Activated CD4-positive, alpha-beta T cell treated with anti-CD3 and anti-CD28 coated beads for 36 hours (primary cell): ENCODE measurements at regions of chr6 and their contacts with region 1.

Region 1: DNA sequence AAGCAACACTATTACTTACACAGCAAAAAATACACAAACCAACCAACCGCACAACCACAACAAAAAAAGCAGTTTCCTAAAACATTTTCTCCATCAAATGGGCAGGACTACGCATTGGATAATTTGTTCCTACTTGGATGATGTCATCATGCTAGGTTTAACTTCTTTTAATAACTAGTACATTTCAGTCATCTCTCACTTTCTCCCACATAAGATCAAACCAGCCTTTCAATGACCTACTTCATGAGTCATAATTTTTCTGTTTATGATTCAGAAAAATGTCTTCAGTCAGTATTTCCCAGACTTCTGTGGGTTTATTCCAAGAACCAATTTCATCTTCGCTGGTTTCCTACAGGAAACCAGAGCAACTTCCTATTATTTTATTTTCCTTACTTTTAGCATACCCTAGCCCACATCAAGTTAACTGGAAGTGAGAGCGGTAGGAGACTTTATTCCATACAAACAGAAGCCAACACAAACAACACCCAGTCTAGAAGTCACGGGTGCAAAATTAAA is 134.2 kb downstream of the GMDS start:
- DNase-seq: peak; percentile 24
- ATAC-seq: peak; percentile 85
- H3K4me3 Mint-ChIP-seq: peak overlapping the region; percentile 62
- H3K27ac Mint-ChIP-seq: peak overlapping the region; percentile 88
- H3K4me1 Mint-ChIP-seq: peaks cover 31% of the 10 kb centered on the region
- H3K27me3 Mint-ChIP-seq: peaks cover 11% of the 10 kb centered on the region

Region 2: DNA sequence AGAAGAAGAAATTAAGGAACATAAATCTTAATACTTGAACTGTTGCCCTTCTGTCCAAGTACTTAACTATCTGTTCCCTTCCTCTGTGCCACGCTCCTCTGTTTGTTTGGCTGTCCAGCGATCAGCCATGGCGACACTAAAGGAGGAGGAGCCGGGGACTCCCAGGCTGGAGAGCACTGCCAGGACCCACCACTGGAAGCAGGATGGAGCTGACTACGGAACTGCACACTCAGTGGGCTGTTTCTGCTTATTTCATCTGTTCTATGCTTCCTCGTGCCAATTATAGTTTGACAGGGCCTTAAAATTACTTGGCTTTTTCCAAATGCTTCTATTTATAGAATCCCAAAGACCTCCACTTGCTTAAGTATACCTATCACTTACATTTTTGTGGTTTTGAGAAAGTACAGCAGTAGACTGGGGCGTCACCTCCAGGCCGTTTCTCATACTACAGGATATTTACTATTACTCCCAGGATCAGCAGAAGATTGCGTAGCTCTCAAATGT is 1702.6 kb before region 1 on chr6:
- CTCF ChIA-PET with region 1: no interaction called
- POLR2A ChIA-PET with region 1: no interaction called
- intact Hi-C with region 1: no loop called
- DNase-seq: peak; percentile 50
- ATAC-seq: no peak
- H3K4me3 Mint-ChIP-seq: no peak overlapping the region
- H3K27ac Mint-ChIP-seq: peak overlapping the region; percentile 59
- H3K4me1 Mint-ChIP-seq: peaks cover 73% of the 10 kb centered on the region
- H3K27me3 Mint-ChIP-seq: no peaks in the 10 kb centered on the region

Region 3: DNA sequence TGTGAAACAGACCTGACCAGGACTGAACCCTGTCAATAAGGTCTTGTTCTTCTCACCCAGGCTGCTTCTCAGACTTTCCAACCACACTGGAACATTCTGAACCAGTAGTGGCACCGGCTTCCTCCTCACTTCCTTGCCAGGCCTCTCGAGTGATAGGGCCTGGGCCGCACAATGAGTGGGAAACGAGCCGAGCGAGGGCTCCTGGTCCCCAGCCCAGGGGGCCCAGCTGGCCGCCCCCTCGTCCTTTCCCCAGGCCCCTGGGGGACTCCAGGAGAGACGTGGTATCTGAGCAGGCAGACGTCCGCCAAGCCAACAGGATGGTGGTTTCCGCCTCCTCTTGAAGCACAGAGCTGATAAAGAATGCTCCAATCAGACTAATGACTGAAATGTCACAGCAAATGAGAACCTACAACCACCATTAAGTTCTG is 16.3 kb after region 1 on chr6:
- CTCF ChIA-PET with region 1: interaction called, 3 read pairs
- POLR2A ChIA-PET with region 1: no interaction called
- intact Hi-C with region 1: loop called (anchors 1 kb)
- DNase-seq: peak; percentile 75
- ATAC-seq: peak; percentile 92
- H3K4me3 Mint-ChIP-seq: no peak overlapping the region
- H3K27ac Mint-ChIP-seq: peak overlapping the region; percentile 8
- H3K4me1 Mint-ChIP-seq: peaks cover 32% of the 10 kb centered on the region
- H3K27me3 Mint-ChIP-seq: no peaks in the 10 kb centered on the region

Region 4: GRCh38 chr6:2186516-2186915 is 75.3 kb after region 1 on chr6:
- CTCF ChIA-PET with region 1: interaction called, 3 read pairs
- POLR2A ChIA-PET with region 1: no interaction called
- intact Hi-C with region 1: loop called (anchors 1 kb)
- DNase-seq: peak; percentile 56
- ATAC-seq: peak; percentile 74
- H3K4me3 Mint-ChIP-seq: no peak overlapping the region
- H3K27ac Mint-ChIP-seq: no peak overlapping the region
- H3K4me1 Mint-ChIP-seq: peaks cover 24% of the 10 kb centered on the region
- H3K27me3 Mint-ChIP-seq: peaks cover 19% of the 10 kb centered on the region

Region 5: GRCh38 chr6:2542858-2543218 is 431.6 kb after region 1 on chr6:
- CTCF ChIA-PET with region 1: no interaction called
- POLR2A ChIA-PET with region 1: no interaction called
- intact Hi-C with region 1: loop called in 1 of 2 experiments (anchors 5 kb)
- DNase-seq: peak; percentile 58
- ATAC-seq: peak; percentile 93
- H3K4me3 Mint-ChIP-seq: no peak overlapping the region
- H3K27ac Mint-ChIP-seq: no peak overlapping the region
- H3K4me1 Mint-ChIP-seq: peaks cover 17% of the 10 kb centered on the region
- H3K27me3 Mint-ChIP-seq: peaks cover 67% of the 10 kb centered on the region

Region 6: GRCh38 chr6:3209114-3210023 is 1098.1 kb after region 1 on chr6:
- CTCF ChIA-PET with region 1: no interaction called
- POLR2A ChIA-PET with region 1: no interaction called
- intact Hi-C with region 1: loop called in 1 of 2 experiments (anchors 2 kb)
- DNase-seq: peak; percentile 80
- ATAC-seq: peak; percentile 87
- H3K4me3 Mint-ChIP-seq: peak overlapping the region; percentile 32
- H3K27ac Mint-ChIP-seq: peak overlapping the region; percentile 86
- H3K4me1 Mint-ChIP-seq: peaks cover 28% of the 10 kb centered on the region
- H3K27me3 Mint-ChIP-seq: peaks cover 34% of the 10 kb centered on the region